A549 (cell line): ENCODE measurements at regions of chr1 and their contacts with region 1.

Region 1: DNA sequence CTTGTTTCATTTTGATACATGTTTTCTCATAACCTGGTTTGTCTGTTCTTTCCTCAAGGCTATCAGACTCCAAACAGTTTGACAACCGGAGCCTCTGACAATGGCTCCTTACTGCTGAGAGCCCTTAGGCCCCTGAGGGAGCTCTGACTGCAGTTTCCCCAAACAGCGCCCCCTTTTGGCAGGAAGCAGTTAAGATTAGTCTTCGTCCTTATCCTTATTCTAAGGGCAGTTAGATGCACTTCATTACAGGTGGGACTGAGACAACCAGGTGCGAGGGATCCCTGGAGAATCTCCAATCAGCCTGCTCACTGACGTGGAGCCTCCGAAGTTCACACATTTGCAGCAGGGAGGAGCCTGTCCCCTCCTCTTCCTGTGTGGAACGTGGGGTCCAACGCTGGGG is 393.1 kb downstream of the BRINP3 start:
- DNase-seq: peak in 1 of 2 experiments; percentile 20
- ATAC-seq: peak in 1 of 2 experiments; percentile 66; a peak in 3 of 6 replicates
- H3K4me3 ChIP-seq: no peak overlapping the region
- H3K27ac ChIP-seq: no peak overlapping the region
- H3K4me1 ChIP-seq: no peaks in the 10 kb centered on the region
- CTCF ChIP-seq: no peak
- EP300 ChIP-seq: no peak
- POLR2A ChIP-seq: no peak
- RAD21 ChIP-seq: no peak

Region 2: GRCh38 chr1:190098756-190099155 is 14.2 kb after region 1 on chr1:
- CTCF ChIA-PET with region 1: interaction called, 11 read pairs
- POLR2A ChIA-PET with region 1: no interaction called
- DNase-seq: no peak
- ATAC-seq: no peak
- H3K4me3 ChIP-seq: no peak overlapping the region
- H3K27ac ChIP-seq: no peak overlapping the region
- H3K4me1 ChIP-seq: peaks cover 6% of the 10 kb centered on the region; the same call in 2 of the 3 replicates
- CTCF ChIP-seq: no peak
- EP300 ChIP-seq: no peak
- POLR2A ChIP-seq: no peak
- RAD21 ChIP-seq: no peak